H1 (cell line): ENCODE measurements at regions of chr20 and their contacts with region 1.

Region 1: DNA sequence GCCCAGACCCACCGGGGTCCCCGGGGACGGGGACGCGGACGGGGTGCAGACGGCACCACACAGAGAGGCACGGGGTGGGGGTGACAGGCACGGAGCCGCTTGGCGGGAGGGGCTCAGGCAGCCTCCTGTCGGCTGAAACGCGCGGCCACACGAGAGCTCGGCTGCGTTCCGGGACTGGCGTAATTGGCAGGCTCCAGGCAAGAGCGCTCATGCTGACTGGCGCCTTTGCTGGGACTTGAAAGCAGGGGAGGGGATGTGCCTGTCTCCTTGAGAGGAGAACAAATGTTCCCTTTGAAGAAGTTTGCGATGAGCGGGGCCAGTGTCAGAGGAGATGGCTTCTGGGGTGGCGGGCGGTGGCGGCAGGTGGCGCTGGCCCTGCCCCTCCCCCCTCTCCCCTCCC is 25.8 kb downstream of the BHLHE23 start:
- DNase-seq: no peak
- H3K4me3 ChIP-seq: no peak overlapping the region
- H3K27ac ChIP-seq: no peak overlapping the region
- H3K4me1 ChIP-seq: peaks cover 0 to 23% (median 10%) of the 10 kb centered on the region in 4 experiments; a peak in 6 of 7 replicates
- H3K27me3 ChIP-seq: no peaks in the 10 kb centered on the region; a peak in 3 of 7 replicates
- CTCF ChIP-seq: no peak
- EP300 ChIP-seq: no peak
- POLR2A ChIP-seq: no peak
- RAD21 ChIP-seq: no peak

Region 2: DNA sequence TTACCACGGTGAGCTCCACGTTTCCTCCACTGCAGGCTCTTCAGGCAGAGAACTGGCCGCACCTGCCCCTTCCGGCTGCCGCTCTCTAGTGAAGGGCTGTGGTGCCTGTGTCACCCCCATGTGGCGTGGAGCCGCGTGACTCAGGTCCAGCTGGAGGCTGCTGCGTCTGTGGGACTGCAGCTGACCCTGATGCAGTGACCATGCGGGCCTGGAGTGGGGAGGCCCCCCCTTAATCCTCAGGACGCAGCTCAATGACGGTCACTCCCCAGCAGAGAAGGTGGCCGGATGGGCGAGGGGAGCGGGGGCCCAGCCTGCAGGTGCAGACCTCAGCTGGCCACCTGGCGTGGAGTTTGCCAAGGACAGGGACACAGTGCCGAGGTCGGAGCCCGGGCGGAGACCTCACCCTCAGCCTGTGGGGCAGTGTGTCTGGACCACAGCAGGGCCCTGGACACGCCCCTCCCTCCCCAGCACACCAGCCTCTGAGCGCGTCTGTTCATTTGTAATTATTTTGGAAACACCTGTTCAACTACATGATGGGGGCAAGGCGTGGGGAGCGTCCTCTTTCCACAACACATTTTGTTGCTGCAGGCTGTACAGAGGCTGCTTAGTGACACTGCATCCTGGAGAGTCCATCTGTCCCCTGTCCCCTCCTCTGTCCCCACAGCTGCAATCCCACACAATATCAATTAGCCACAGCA is 15.1 kb after region 1 on chr20:
- CTCF ChIA-PET with region 1: interaction called, 22 read pairs
- POLR2A ChIA-PET with region 1: interaction called, 9 read pairs
- DNase-seq: no peak
- H3K4me3 ChIP-seq: no peak overlapping the region
- H3K27ac ChIP-seq: no peak overlapping the region
- H3K4me1 ChIP-seq: peaks cover 0 to 13% (median 7%) of the 10 kb centered on the region in 4 experiments; a peak in 5 of 7 replicates
- H3K27me3 ChIP-seq: peaks cover 0 to 5% (median 2%) of the 10 kb centered on the region in 4 experiments; a peak in 3 of 7 replicates
- CTCF ChIP-seq: no peak
- EP300 ChIP-seq: no peak
- POLR2A ChIP-seq: no peak
- RAD21 ChIP-seq: no peak